ENCODE measurements at regions of chr6 and their contacts with region 1.

Region 1: GRCh38 chr6:24595512-24596217 is 50.3 kb downstream of the KIAA0319 start:
- DNase-seq: no peak
- H3K4me3 ChIP-seq: no peak overlapping the region
- CTCF ChIP-seq: no peak

Region 2: DNA sequence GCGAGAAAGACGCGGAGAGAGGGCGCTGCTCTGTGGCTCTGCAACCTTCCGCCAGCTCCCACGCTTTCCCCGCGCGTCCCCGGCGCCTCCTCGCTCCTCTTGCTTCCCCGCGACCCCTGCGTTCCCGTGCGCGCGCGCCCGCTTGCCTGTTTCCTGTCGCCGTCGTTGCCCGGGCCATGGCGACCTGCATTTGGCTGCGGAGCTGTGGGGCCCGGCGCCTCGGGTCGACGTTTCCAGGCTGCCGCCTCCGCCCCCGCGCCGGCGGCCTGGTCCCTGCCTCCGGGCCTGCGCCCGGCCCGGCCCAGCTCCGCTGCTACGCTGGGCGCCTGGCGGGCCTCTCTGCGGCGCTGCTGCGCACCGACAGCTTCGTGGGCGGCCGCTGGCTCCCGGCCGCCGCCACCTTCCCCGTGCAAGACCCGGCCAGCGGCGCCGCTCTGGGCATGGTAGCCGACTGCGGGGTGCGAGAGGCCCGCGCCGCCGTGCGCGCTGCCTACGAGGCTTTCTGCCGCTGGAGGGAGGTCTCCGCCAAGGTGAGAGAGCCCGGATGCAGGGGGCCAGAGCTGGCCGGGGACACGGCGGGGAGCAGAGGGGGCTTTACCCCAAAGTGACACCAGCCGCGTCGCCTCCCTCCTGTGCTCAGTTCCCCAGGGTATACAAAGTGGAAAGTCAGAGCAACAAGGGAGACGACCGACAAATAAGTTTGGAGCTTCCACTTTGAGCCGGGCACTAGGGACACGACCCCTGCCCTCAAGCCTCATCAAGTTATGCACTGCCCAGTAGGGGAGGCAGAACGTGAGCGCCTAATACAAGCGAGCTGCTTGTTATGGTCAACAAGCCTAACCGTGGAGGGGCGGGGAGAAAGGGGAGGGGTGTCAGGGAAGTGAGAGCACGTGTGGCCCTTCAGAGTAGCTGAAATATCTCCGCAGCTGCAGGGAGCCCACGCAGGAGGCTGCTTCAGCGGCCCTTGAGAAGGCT is 100.6 kb before region 1 on chr6 and contains the start of gene ALDH5A1:
- in situ Hi-C with region 1: no loop called
- DNase-seq: peak; percentile 11
- H3K4me3 ChIP-seq: peak within 1 kb of the TSS; percentile 51
- CTCF ChIP-seq: peak; percentile 18

Region 3: GRCh38 chr6:24529985-24530384 is 65.7 kb before region 1 on chr6:
- in situ Hi-C with region 1: loop called (anchors 5 kb)
- DNase-seq: no peak
- H3K4me3 ChIP-seq: no peak overlapping the region
- CTCF ChIP-seq: no peak